Caki2 (cell line): ENCODE measurements at regions of chr3 and their contacts with region 1.

Region 1: DNA sequence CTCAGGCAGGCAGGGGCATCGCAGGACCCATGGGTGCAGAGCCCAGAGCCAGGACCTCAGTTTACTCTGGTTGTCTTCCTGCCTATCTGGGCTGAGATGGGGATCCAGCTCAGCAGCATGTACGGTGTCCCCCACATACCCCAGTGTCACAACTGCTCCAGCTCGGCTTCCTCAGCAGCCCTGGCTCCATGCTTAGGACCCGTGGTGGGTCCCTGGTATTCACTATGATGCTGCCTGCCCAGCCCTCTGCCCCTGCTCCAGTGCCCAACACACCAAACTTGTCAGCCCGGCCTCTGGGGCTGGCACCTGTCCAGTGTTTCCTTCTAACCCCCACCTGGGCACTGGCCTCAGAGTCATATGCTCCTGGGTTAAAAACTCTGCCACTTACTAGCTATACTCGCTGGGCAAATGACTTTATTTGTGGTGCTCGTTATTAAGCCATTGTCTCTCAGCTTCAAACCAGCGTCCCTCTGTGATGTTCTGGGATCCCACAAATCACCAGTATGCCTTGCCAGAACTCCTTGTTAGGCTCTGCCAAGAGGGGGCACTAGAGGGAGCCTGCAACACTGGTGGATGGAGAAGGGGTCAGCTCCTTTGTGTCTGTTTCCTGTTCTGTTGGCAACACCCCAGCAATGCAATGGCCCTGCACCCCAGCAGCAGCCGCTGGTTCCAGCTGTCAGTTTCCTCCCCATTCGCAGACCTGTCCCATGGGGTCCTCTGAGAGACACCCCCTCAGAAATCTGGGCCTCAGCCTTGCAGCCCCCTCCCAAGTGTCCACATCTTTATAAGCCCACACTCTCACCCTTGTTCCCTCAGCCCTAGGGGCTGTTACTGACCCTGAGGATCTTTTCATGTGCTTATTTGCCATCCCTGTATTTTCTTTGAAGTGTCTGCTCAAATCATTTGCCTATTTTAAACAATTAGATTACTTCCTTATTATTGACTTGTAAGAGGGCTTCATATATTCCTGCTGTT is 24.1 kb upstream of the MRPS22 start:
- DNase-seq: no peak

Region 2: DNA sequence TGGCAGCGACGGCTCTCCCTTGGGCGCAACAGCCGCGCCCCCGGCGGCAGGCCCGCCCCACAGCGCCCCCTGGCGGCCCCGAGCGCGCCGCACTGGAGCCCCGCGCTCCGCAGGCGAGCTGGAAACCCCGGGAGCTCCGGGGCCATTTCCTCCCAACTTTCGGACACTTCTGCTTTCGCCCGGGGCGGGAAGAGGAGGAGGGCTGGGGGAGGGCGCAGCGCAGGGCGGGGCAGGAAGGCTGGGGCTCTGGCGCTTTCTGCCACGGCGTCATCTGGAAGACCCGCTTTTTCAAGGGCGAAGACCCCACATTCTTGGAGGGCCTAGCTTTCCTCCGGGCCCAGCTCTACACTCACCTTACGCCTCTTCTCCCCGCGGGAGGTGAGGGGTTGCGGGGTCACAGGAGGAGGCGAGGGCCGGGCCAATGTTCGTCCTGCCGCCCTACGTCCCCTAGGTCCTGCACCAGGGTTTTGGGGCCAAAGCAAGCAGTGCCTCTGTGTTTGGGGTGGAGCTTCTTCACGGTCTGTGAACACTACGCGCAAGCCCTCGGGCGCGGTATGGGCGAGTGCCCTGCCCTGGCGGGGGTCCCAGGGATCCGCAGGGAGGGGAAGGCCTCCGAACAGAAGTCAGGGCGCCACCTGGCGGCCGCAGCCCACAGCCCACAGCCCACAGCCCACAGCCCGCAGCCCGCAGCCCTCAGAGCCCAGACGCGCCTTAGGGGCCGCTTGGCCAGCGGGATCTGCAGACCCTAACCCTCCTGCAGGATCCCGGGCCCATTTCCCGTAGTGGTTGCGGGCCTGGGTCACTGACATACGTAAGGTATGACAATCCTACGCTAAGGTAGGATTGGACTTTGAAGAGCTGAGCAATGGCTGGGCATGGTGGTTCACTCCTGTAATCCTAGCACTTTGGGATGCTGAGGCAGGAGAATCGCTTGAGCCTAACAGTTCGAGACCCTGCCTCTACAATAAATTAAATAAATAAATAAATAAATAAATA is 403.9 kb before region 1 on chr3:
- in situ Hi-C with region 1: loop called (anchors 25 kb)
- DNase-seq: peak; percentile 95

Region 3: GRCh38 chr3:139111392-139112229 is 208.1 kb before region 1 on chr3:
- in situ Hi-C with region 1: loop called (anchors 10 kb)
- DNase-seq: peak; percentile 52